ENCODE measurements at regions of chr10 and their contacts with region 1.

Region 1: DNA sequence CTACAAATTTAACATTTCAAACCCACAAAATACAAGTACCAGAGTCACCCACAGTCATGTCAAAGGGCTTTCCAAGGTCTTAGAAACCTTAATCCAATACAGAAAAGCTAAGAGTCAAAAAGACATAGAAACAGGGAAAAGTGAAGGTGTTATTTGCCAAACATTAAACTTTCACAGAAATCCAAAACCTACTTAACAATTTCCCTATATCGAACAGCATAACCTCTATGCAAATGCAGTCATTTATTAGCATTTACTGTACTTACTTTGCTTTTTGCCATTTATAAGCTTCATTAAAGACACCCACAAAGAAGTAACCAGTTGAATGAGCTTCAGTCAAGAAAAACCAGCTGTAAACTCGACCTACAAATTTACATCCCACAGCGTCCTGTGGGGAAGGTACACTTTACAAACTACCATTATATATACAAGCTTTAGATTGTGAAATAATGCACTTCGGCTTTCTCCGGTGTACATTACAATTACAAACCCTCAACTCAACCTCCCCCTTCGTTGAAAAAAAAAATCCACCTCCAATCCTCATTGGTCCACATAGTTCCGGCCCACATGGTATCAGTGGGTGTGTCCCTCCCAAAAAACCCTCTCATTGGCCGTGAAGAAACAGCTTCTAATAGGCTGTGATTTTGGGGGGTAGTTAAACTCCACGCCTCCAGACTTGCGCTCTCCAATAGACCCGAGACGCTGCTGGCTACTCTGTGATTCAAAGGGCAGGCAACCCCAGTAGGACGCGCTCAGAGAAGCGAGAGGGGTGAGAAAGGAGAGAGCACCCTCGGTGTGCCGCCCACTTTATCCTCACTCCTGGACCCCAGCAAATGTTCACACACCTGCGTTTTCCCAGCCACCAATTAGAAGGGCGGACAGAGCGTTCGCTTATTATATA is 1.4 kb downstream of the PANK1 start:
- DNase-seq: peak; percentile 94
- ATAC-seq: peak; percentile 92
- H3K4me3 ChIP-seq: peak overlapping the region; percentile 83
- H3K27ac ChIP-seq: peak overlapping the region; percentile 60
- H3K4me1 ChIP-seq: peaks cover 7% of the 10 kb centered on the region; the same call in 1 of the 2 replicates
- H3K27me3 ChIP-seq: no peaks in the 10 kb centered on the region
- CTCF ChIP-seq: no peak
- EP300 ChIP-seq: no peak
- POLR2A ChIP-seq: peak; percentile 94
- RAD21 ChIP-seq: no peak

Region 2: DNA sequence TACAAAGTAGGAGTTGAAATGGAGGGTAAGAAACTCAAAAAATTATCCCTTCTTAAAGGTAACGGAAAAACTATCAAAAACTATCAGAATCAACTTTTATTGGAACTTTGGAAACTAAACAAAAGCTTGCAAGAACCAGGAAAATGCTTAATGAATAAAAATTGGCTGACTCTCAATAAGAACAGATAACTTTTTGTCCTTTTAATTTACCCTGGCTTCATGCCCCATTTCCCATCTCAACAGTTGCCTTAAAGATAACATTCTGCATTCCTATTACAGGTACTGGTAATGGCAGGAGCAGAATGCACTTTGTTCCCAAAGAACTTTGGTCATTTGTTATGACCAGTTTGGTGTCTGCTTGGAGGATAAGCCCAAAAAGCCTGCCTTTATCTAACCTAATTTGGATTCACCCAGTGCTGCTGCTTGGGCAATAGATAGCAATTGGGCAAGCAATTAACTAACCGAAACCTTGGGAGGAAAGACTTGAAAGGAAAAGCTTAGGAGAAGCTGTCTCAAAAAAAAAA is 454.4 kb before region 1 on chr10:
- CTCF ChIA-PET with region 1: no interaction called
- POLR2A ChIA-PET with region 1: no interaction called
- RAD21 ChIA-PET with region 1: no interaction called
- SMC1A ChIA-PET with region 1: no interaction called
- in situ Hi-C with region 1: no loop called
- intact Hi-C with region 1: no loop called
- DNase-seq: no peak
- ATAC-seq: no peak
- H3K4me3 ChIP-seq: no peak overlapping the region
- H3K27ac ChIP-seq: no peak overlapping the region
- H3K4me1 ChIP-seq: no peaks in the 10 kb centered on the region
- H3K27me3 ChIP-seq: no peaks in the 10 kb centered on the region
- CTCF ChIP-seq: no peak
- EP300 ChIP-seq: no peak
- POLR2A ChIP-seq: no peak
- RAD21 ChIP-seq: no peak

Region 3: DNA sequence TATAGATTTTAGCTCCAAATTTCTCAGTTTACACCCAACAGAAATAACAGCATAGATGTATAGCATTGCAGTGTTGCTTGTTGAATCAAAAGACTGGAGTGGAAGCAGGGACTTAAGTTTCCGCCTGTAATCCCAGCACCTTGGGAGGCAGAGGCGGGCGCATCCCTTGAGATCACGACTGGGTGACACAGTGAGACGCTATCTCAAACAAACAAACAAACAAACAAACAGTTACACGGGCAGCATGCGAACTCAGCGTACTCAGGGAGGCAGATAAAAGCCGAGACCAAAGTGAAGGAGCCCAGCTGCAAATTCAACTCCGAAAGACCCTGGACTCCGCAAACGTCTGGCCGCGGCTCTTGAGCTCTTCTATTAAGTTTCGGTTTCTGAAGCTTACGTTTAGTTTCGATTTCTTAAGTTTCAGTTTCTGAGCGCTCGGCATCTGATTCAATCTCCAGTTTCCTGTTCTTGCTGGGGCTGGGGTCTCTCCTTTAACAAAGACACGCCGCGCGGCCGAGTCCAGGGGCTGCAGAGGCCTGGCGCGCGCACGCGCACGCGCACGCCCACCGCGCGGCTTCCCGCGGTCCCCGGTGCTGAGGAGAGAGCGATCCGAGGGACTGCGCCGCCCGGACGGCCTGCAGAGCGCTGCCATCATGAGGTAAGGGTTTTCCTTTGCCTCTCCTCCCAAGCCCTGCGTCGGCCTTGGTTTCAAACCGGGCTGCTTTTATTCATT is 229.4 kb before region 1 on chr10 and contains the start of gene IFIT5:
- CTCF ChIA-PET with region 1: no interaction called
- POLR2A ChIA-PET with region 1: interaction called, 3 read pairs
- RAD21 ChIA-PET with region 1: interaction called, 3 read pairs
- SMC1A ChIA-PET with region 1: interaction called, 4 read pairs
- in situ Hi-C with region 1: no loop called
- intact Hi-C with region 1: loop called (anchors 5 kb)
- DNase-seq: peak; percentile 58
- ATAC-seq: peak; percentile 84
- H3K4me3 ChIP-seq: peak within 1 kb of the TSS; percentile 79
- H3K27ac ChIP-seq: peak within 1 kb of the TSS; percentile 97
- H3K4me1 ChIP-seq: no peaks in the 10 kb centered on the region
- H3K27me3 ChIP-seq: no peaks in the 10 kb centered on the region
- CTCF ChIP-seq: no peak
- EP300 ChIP-seq: no peak
- POLR2A ChIP-seq: peak; percentile 57
- RAD21 ChIP-seq: no peak
- polyA plus RNA-seq, gene IFIT5: 5.9 to 8.3 TPM

Region 4: GRCh38 chr10:89609833-89610346 is 33.8 kb before region 1 on chr10:
- CTCF ChIA-PET with region 1: interaction called, 12 read pairs
- POLR2A ChIA-PET with region 1: interaction called, 4 read pairs
- RAD21 ChIA-PET with region 1: interaction called, 7 read pairs
- SMC1A ChIA-PET with region 1: interaction called, 21 read pairs
- in situ Hi-C with region 1: no loop called
- intact Hi-C with region 1: no loop called
- DNase-seq: peak; percentile 37
- ATAC-seq: peak; percentile 98
- H3K4me3 ChIP-seq: no peak overlapping the region
- H3K27ac ChIP-seq: no peak overlapping the region; the same call in 1 of the 2 replicates
- H3K4me1 ChIP-seq: peaks cover 12% of the 10 kb centered on the region
- H3K27me3 ChIP-seq: no peaks in the 10 kb centered on the region
- CTCF ChIP-seq: peak; percentile 26 to 29 (median 26); a peak in 5 of 6 replicates
- EP300 ChIP-seq: 0 out of 4 replicates have a peak, but pooled peaks of 1 of the 2 experiments have one; percentile 24
- POLR2A ChIP-seq: no peak
- RAD21 ChIP-seq: peak; percentile 67

Region 5: DNA sequence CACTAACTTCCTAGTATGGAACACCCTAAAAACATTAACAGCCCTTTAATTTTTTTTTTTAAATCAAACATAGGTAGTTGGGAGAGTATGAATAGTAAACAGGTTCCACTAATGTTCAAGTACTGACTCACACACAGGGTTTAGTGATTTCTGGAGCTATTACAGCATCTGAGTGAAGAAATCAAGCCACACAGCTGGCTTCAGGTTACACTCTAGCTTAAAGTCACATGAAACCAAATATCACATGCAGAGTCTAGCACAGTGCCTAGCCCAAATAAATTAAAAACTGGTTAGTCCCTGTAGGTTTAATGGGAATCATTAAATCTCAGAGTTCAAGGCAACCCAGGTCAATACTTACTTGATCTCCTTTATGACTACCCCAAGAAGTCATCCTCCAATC is 10.2 kb before region 1 on chr10:
- CTCF ChIA-PET with region 1: interaction called, 5 read pairs
- POLR2A ChIA-PET with region 1: interaction called, 8 read pairs
- RAD21 ChIA-PET with region 1: interaction called, 4 read pairs
- SMC1A ChIA-PET with region 1: interaction called, 13 read pairs
- in situ Hi-C with region 1: no loop called
- intact Hi-C with region 1: no loop called
- DNase-seq: no peak
- ATAC-seq: peak; percentile 52
- H3K4me3 ChIP-seq: no peak overlapping the region
- H3K27ac ChIP-seq: no peak overlapping the region
- H3K4me1 ChIP-seq: no peaks in the 10 kb centered on the region
- H3K27me3 ChIP-seq: no peaks in the 10 kb centered on the region
- CTCF ChIP-seq: no peak
- EP300 ChIP-seq: no peak
- POLR2A ChIP-seq: no peak
- RAD21 ChIP-seq: no peak

Region 6: DNA sequence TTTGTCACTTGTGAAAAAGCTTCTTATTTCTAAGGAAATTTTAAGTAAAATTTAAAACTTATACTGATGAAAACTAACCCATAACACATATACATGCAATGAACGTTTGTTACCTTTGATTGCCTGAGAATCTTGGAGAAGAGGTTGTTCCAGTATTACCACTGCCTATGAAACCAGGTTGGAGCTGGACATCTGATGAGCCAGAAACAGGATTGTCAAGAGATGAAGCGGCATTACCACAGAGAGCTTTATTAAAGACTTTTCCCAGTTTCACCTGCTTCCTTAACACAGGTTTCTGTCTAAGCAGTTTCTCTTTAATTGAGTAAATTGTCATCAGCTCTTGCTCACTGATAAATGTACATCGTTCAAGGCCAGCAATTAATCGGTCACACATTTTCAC is 48.7 kb after region 1 on chr10:
- CTCF ChIA-PET with region 1: interaction called, 3 read pairs
- POLR2A ChIA-PET with region 1: no interaction called
- RAD21 ChIA-PET with region 1: no interaction called
- SMC1A ChIA-PET with region 1: interaction called, 10 read pairs
- in situ Hi-C with region 1: no loop called
- intact Hi-C with region 1: no loop called
- DNase-seq: no peak
- ATAC-seq: no peak
- H3K4me3 ChIP-seq: no peak overlapping the region
- H3K27ac ChIP-seq: no peak overlapping the region
- H3K4me1 ChIP-seq: no peaks in the 10 kb centered on the region
- H3K27me3 ChIP-seq: no peaks in the 10 kb centered on the region
- CTCF ChIP-seq: no peak
- EP300 ChIP-seq: no peak
- POLR2A ChIP-seq: no peak
- RAD21 ChIP-seq: no peak

Region 7: GRCh38 chr10:89701238-89702120 is 57.8 kb after region 1 on chr10 and contains the start of gene KIF20B:
- CTCF ChIA-PET with region 1: interaction called, 12 read pairs
- POLR2A ChIA-PET with region 1: interaction called, 6 read pairs
- RAD21 ChIA-PET with region 1: interaction called, 34 read pairs
- SMC1A ChIA-PET with region 1: interaction called, 13 read pairs
- in situ Hi-C with region 1: no loop called
- intact Hi-C with region 1: loop called (anchors 1 kb)
- DNase-seq: peak; percentile 88
- ATAC-seq: peak; percentile 95
- H3K4me3 ChIP-seq: peak within 1 kb of the TSS; percentile 77
- H3K27ac ChIP-seq: peak within 1 kb of the TSS; percentile 83
- H3K4me1 ChIP-seq: peaks cover 4% of the 10 kb centered on the region; the same call in 1 of the 2 replicates
- H3K27me3 ChIP-seq: no peaks in the 10 kb centered on the region
- CTCF ChIP-seq: peak; percentile 23 to 64 (median 40); a peak in 4 of 6 replicates
- EP300 ChIP-seq: no peak
- POLR2A ChIP-seq: peak; percentile 95
- RAD21 ChIP-seq: peak; percentile 62
- polyA plus RNA-seq, gene KIF20B: 28.2 to 59.4 TPM

Region 8: GRCh38 chr10:89738551-89739209 is 95.0 kb after region 1 on chr10:
- CTCF ChIA-PET with region 1: no interaction called
- POLR2A ChIA-PET with region 1: interaction called, 3 read pairs
- RAD21 ChIA-PET with region 1: interaction called, 8 read pairs
- SMC1A ChIA-PET with region 1: interaction called, 10 read pairs
- in situ Hi-C with region 1: no loop called
- intact Hi-C with region 1: no loop called
- DNase-seq: peak; percentile 55
- ATAC-seq: peak; percentile 96
- H3K4me3 ChIP-seq: no peak overlapping the region
- H3K27ac ChIP-seq: peak overlapping the region; percentile 64
- H3K4me1 ChIP-seq: peaks cover 14% of the 10 kb centered on the region; the same call in 1 of the 2 replicates
- H3K27me3 ChIP-seq: no peaks in the 10 kb centered on the region
- CTCF ChIP-seq: no peak
- EP300 ChIP-seq: no peak
- POLR2A ChIP-seq: no peak
- RAD21 ChIP-seq: no peak

Region 9: GRCh38 chr10:89946106-89946505 is 302.4 kb after region 1 on chr10:
- CTCF ChIA-PET with region 1: no interaction called
- POLR2A ChIA-PET with region 1: no interaction called
- RAD21 ChIA-PET with region 1: no interaction called
- SMC1A ChIA-PET with region 1: no interaction called
- in situ Hi-C with region 1: no loop called
- intact Hi-C with region 1: no loop called
- DNase-seq: no peak
- ATAC-seq: no peak
- H3K4me3 ChIP-seq: no peak overlapping the region
- H3K27ac ChIP-seq: no peak overlapping the region
- H3K4me1 ChIP-seq: no peaks in the 10 kb centered on the region
- H3K27me3 ChIP-seq: peaks cover 0 to 2% of the 10 kb centered on the region in 2 experiments; a peak in 2 of 4 replicates
- CTCF ChIP-seq: no peak
- EP300 ChIP-seq: no peak
- POLR2A ChIP-seq: no peak
- RAD21 ChIP-seq: no peak

Region 10: GRCh38 chr10:90470966-90471365 is 827.3 kb after region 1 on chr10:
- CTCF ChIA-PET with region 1: no interaction called
- POLR2A ChIA-PET with region 1: no interaction called
- RAD21 ChIA-PET with region 1: no interaction called
- SMC1A ChIA-PET with region 1: no interaction called
- in situ Hi-C with region 1: no loop called
- intact Hi-C with region 1: no loop called
- DNase-seq: no peak
- ATAC-seq: no peak
- H3K4me3 ChIP-seq: no peak overlapping the region
- H3K27ac ChIP-seq: no peak overlapping the region
- H3K4me1 ChIP-seq: no peaks in the 10 kb centered on the region
- H3K27me3 ChIP-seq: no peaks in the 10 kb centered on the region; a peak in 1 of 4 replicates
- CTCF ChIP-seq: no peak
- EP300 ChIP-seq: no peak
- POLR2A ChIP-seq: no peak
- RAD21 ChIP-seq: no peak